Caco-2 (cell line): ENCODE measurements at regions of chr15 and their contacts with region 1.

Region 1: DNA sequence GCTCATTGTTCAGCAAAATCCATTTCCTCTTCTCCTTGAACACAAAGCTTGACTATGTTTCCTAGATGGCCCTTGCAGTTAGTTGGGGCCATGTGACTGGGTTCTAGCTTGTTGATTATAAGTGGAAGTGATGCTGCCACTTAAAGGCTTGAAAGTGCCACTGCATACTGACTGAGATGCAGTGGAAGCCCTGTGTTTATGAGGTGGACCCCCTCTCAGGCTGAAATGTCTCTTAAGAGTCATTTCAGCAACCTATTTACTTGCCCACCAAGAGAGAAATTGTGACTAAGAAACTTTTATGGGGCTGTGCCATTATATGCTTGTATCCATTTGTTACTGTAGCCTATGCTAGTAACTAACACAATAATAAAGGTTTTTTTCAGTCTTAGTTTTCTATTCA is 8.4 kb upstream of the ANP32A start:
- DNase-seq: peak in 1 of 2 experiments; percentile 10
- H3K4me3 ChIP-seq: no peak overlapping the region
- H3K4me3 Mint-ChIP-seq: no peak overlapping the region
- H3K27ac Mint-ChIP-seq: no peak overlapping the region
- H3K4me1 ChIP-seq: no peaks in the 10 kb centered on the region
- H3K4me1 Mint-ChIP-seq: no peaks in the 10 kb centered on the region
- H3K27me3 ChIP-seq: no peaks in the 10 kb centered on the region; the same call in 1 of the 2 replicates
- H3K27me3 Mint-ChIP-seq: peaks cover 7% of the 10 kb centered on the region
- CTCF ChIP-seq: peak in 1 of 2 experiments; percentile 43

Region 2: DNA sequence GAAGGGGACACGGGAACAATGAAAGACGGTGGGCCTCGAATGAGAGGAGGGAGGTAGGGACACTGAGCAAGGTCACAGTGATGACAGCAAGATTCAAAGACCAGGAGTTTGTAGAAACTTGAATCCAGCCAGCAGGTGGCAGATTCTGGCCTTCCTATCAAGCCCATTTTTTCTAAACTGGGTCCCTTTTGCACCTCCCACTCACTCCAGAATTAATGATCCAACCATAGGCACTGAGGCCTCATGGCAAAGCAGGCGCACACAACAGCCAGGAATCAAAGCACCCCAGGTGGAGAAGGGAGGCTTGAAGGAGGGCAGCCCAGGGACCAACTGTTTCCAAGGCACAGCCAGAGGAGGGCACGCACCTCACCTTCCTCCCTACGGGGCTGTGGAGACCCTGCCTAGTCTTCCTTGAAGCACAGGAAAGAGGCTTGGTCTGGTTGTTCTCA is 98.6 kb before region 1 on chr15:
- CTCF ChIA-PET with region 1: interaction called, 7 read pairs
- POLR2A ChIA-PET with region 1: no interaction called
- intact Hi-C with region 1: loop called (anchors 1 kb)
- DNase-seq: peak; percentile 40 to 44
- H3K4me3 ChIP-seq: no peak overlapping the region
- H3K4me3 Mint-ChIP-seq: no peak overlapping the region
- H3K27ac Mint-ChIP-seq: no peak overlapping the region
- H3K4me1 ChIP-seq: peaks cover 16% of the 10 kb centered on the region; the same call in 1 of the 2 replicates
- H3K4me1 Mint-ChIP-seq: peaks cover 15% of the 10 kb centered on the region
- H3K27me3 ChIP-seq: no peaks in the 10 kb centered on the region
- H3K27me3 Mint-ChIP-seq: peaks cover 4% of the 10 kb centered on the region
- CTCF ChIP-seq: peak; percentile 48 to 56

Region 3: DNA sequence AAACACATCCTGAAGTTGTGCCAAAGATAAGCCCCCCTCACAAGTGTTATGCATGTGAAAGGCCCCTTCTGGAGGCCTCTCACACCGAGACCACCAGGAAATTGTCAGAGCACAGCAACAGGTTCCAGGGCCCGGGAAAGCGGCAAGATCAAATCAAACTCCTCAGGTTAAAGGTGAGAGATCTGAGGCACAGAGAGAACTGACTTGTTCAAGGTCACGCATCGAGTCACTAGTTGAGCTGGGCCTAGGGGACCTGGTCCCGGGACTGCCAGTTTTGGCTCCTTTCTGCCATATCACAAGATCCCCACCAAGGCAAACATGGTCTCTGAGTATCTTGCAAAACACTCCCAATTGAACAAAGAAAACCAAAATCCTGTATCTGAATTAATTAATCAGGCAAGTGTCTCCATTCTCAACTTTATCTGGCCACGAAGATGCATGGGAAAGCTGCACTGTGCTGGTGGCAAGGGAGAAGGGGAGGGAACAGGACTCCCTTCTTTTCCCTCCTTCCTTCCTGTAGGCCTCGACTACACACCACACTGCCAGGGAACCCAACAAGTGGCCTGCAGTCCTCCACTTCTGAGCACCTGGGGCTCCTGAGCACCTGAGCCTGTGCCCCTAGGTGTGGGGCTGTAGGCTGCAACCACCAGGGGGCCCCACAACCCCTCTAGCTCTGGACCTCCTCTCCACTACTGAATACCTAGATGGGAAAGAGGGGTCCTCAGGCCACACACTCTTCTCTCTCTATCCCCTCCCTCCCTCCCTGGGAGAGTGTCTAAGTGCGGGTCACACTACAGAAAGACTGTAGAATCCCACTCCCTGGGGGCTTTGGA is 45.6 kb before region 1 on chr15:
- CTCF ChIA-PET with region 1: interaction called, 6 read pairs
- POLR2A ChIA-PET with region 1: no interaction called
- intact Hi-C with region 1: loop called (anchors 1 kb)
- DNase-seq: peak; percentile 48 to 70
- H3K4me3 ChIP-seq: no peak overlapping the region
- H3K4me3 Mint-ChIP-seq: no peak overlapping the region
- H3K27ac Mint-ChIP-seq: no peak overlapping the region
- H3K4me1 ChIP-seq: peaks cover 17% of the 10 kb centered on the region
- H3K4me1 Mint-ChIP-seq: peaks cover 11% of the 10 kb centered on the region
- H3K27me3 ChIP-seq: no peaks in the 10 kb centered on the region
- H3K27me3 Mint-ChIP-seq: no peaks in the 10 kb centered on the region
- CTCF ChIP-seq: peak; percentile 64 to 81